ENCODE measurements at regions of chr18 and their contacts with region 1.

Region 1: DNA sequence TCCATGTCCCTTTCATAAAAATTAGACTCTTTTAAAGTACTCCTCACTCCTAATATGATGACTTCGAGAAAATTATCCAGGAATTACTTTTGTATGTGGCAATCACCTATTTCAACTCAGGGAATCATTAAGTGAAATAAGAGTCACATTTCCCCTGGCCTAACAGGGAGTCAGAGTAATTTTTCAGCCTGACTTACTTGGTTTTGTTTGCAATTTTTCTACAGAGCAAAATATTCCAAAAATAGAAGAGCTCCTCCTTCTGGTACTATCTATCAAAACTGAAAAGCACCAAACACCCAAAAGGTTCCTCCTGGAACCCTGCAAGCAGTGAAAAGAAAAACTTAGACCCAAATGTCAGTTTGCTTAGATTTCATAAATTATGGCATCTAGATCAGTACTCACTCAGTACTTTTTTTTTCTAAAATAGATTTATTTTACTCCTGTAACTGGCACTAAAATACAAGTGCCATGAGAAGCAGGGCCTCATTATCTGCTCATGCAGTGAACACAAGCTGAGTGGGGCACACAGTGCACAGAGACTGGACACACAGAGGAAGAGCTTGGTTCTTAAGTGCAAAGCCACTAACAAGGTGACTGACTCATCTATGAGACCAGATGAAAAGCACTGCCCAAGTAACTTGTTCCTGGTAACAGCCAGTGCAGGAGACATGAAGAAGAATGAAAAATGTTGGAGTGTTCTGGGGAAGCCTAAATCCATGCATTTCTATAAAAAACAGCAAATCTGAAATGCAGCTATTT is 28.7 kb downstream of the ACAA2 start:
- DNase-seq: peak; percentile 77
- H3K4me3 ChIP-seq: no peak overlapping the region
- H3K27ac ChIP-seq: peak overlapping the region; percentile 33
- H3K4me1 ChIP-seq: peaks cover 15% of the 10 kb centered on the region
- H3K27me3 ChIP-seq: no peaks in the 10 kb centered on the region

Region 2: GRCh38 chr18:49561289-49562193 is 223.1 kb before region 1 on chr18 and contains the start of gene LIPG:
- in situ Hi-C with region 1: loop called (anchors 10 kb)
- DNase-seq: peak; percentile 74
- H3K4me3 ChIP-seq: peak within 1 kb of the TSS; percentile 63
- H3K27ac ChIP-seq: no peak within 1 kb of the TSS
- H3K4me1 ChIP-seq: peaks cover 8% of the 10 kb centered on the region; the same call in 1 of the 2 replicates
- H3K27me3 ChIP-seq: peaks cover 44% of the 10 kb centered on the region
- total RNA-seq, gene LIPG: 0.25 and 0.43 TPM in 2 replicates

Region 3: GRCh38 chr18:50051288-50051687 is 266.7 kb after region 1 on chr18:
- in situ Hi-C with region 1: no loop called
- DNase-seq: peak; percentile 5
- H3K4me3 ChIP-seq: no peak overlapping the region
- H3K27ac ChIP-seq: no peak overlapping the region
- H3K4me1 ChIP-seq: no peaks in the 10 kb centered on the region
- H3K27me3 ChIP-seq: no peaks in the 10 kb centered on the region

Measured in GM23248 (cell line).